Esophagus squamous epithelium (tissue), 5 donors: ENCODE measurements at regions of chr4 and their contacts with region 1.

Region 1: GRCh38 chr4:88533937-88534750 is 10.6 kb upstream of the PYURF start:
- DNase-seq: no peak
- H3K4me3 ChIP-seq: no peak overlapping the region
- H3K27ac ChIP-seq: peak overlapping the region in 1 of 4 donors; percentile 36
- H3K4me1 ChIP-seq: peaks cover 1 to 14% (median 4%) of the 10 kb centered on the region in 3 donors
- H3K27me3 ChIP-seq: no peaks in the 10 kb centered on the region
- CTCF ChIP-seq: no peak
- POLR2A ChIP-seq: no peak

Region 2: DNA sequence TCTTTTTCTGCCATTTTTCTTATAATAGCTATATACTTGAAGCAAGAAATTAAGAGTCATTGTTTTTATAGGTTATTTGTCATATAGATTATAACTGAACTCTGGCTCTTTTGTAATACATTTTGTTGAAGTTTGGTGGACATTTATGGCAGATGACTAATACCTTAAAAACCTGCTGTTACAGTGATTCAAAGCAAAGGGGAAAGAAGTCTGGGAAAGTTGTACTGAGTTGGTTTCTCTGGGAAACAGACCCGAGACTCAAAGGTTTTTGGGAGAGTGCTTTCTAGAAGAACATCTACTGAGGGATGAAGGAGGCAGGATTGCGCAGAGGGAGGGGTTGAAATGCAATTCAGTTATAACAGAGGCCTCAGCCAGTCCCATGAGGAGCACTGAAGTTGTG is 127.6 kb after region 1 on chr4:
- intact Hi-C with region 1: loop called (anchors 5 kb)
- DNase-seq: no peak
- H3K4me3 ChIP-seq: no peak overlapping the region
- H3K27ac ChIP-seq: no peak overlapping the region
- H3K4me1 ChIP-seq: peaks cover 0 to 8% (median 0%) of the 10 kb centered on the region in 3 donors
- H3K27me3 ChIP-seq: no peaks in the 10 kb centered on the region
- CTCF ChIP-seq: no peak
- POLR2A ChIP-seq: no peak